Dendritic cell treated with granulocyte-macrophage colony-stimulating factor and Interleukin-4, amounts not matched to agents 40 ng/mL and 50 ng/mL, for 4 days (primary cell): ENCODE measurements at regions of chr7 and their contacts with region 1.

Region 1: GRCh38 chr7:17946591-17946990 is 6.3 kb upstream of the SNX13 start:
- H3K4me3 Mint-ChIP-seq: no peak overlapping the region
- H3K27ac Mint-ChIP-seq: no peak overlapping the region
- H3K4me1 Mint-ChIP-seq: peaks cover 20% of the 10 kb centered on the region
- H3K27me3 Mint-ChIP-seq: peaks cover 1% of the 10 kb centered on the region

Region 2: GRCh38 chr7:17983221-17984062 is 36.9 kb after region 1 on chr7:
- intact Hi-C with region 1: loop called (anchors 2 kb)
- H3K4me3 Mint-ChIP-seq: no peak overlapping the region
- H3K27ac Mint-ChIP-seq: peak overlapping the region; percentile 80
- H3K4me1 Mint-ChIP-seq: peaks cover 14% of the 10 kb centered on the region
- H3K27me3 Mint-ChIP-seq: no peaks in the 10 kb centered on the region

Region 3: DNA sequence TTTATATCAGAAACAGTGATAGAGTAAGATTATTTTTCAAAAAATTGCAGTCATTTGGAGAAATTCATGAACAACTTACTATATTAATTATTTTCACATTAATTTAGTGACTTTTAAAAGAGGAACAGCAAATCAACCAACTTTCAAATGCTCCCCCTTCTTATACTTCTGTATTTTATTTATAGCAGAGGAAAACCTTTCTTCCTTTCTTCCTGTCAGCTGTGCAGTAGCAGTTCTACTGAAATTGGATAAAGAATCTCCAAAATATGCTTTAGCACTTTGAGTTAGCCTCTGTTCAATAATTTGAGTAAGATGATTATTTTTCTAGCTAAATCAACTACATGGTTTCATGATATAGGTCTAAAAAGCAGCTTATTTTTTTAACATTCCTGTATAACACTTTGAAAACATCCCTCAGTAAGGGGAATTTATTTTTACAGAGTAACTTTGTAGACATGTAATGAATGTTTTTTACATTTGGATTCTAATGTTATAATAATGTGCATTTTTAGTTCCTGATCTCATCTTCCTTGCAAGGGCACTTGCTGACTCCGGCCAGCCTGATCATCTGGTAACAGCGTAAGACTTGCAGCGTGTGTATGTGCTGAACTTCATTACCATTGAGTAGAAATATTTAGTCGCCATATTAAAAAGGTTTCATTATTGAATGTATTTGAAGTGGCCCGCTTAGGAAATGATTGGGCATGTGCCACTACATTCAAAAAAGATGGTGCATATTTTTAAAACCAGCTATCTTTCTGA is 390.6 kb after region 1 on chr7:
- intact Hi-C with region 1: loop called (anchors 5 kb)
- H3K4me3 Mint-ChIP-seq: peak overlapping the region; percentile 46
- H3K27ac Mint-ChIP-seq: peak overlapping the region; percentile 77
- H3K4me1 Mint-ChIP-seq: peaks cover 35% of the 10 kb centered on the region
- H3K27me3 Mint-ChIP-seq: no peaks in the 10 kb centered on the region